ENCODE measurements at regions of chr12 and their contacts with region 1.

Region 1: GRCh38 chr12:49866859-49867579 is 24.1 kb upstream of the BCDIN3D start:
- DNase-seq: no peak
- H3K4me3 ChIP-seq: no peak overlapping the region
- CTCF ChIP-seq: peak; percentile 96

Region 2: DNA sequence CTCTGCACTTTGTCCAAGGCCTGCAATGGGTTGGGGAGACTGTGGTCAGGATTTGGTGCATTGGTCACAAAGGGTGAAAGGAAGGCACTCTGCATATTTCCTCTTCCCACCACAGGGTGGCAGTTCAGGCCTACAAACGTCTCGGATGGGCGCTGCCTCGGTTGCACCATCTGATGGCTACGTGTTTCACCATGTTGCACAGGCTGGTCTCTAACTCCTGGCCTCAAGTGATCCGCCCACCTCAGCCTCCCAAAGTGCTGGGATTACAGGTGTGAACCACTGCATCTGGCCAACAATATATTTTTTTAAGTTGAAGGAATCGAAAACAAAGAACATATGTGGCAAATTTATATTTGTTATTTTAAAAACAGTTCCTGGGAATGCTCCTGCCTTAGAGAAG is 90.6 kb before region 1 on chr12:
- CTCF ChIA-PET with region 1: interaction called, 26 read pairs
- POLR2A ChIA-PET with region 1: no interaction called
- DNase-seq: no peak
- H3K4me3 ChIP-seq: no peak overlapping the region
- CTCF ChIP-seq: peak; percentile 83

Region 3: DNA sequence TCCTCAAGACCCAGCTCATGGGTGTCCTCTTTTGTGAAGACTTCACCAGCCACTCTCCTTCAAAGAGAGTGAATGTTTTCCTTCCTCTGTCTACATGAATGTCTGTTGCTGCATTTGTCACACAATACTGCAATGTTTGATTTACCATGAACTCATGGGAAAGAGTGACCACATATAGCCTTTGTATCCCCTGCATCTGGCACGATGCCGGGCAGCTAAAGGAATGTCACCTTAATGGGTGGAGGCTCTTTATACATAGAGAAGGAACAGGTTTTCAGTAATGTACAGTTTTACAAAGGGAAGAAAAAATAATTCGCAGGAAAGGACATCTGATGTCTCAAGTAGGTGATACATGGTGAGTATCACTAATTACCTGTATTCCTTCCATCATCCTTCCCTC is 12.0 kb before region 1 on chr12:
- CTCF ChIA-PET with region 1: interaction called, 47 read pairs
- POLR2A ChIA-PET with region 1: no interaction called
- DNase-seq: no peak
- H3K4me3 ChIP-seq: no peak overlapping the region
- CTCF ChIP-seq: no peak

Region 4: GRCh38 chr12:49892084-49892731 is 25.2 kb after region 1 on chr12:
- CTCF ChIA-PET with region 1: interaction called, 14 read pairs
- POLR2A ChIA-PET with region 1: interaction called, 3 read pairs
- DNase-seq: no peak
- H3K4me3 ChIP-seq: no peak overlapping the region
- CTCF ChIP-seq: no peak

Region 5: DNA sequence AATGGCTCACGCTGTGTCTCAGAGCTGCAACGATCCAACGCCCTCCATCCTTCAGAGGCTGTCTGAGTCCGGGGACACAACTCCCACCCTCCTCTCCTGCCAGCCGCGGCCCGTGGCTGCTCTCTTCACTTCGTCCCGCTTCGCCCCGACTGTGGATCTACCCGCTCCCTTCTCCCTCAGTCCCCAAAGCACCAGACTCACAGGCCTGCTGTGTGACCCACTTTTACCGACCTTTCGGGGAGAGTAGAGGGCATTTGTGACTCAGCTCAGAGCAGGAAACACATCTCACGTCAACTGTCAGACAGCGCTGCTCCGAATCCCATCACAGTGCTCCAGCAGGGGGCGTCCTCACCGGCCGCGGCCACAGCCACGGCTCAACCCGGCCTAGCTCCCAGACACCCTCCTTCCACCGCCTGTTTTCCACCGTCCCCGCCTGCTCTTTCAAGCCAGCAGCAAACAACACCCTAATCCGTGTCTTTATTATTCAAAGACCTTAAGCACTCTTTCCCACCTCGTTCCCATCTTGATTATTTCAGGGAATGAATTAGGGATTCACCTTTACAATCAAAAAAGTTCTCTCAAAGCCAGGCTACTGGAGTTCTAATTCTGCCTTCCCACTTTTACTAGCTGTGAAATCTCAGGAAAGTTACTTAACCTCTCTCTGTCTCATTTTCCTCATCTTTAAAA is 78.5 kb after region 1 on chr12:
- CTCF ChIA-PET with region 1: interaction called, 41 read pairs
- POLR2A ChIA-PET with region 1: no interaction called
- DNase-seq: peak; percentile 12
- H3K4me3 ChIP-seq: peak overlapping the region; percentile 28
- CTCF ChIP-seq: peak; percentile 96

Region 6: DNA sequence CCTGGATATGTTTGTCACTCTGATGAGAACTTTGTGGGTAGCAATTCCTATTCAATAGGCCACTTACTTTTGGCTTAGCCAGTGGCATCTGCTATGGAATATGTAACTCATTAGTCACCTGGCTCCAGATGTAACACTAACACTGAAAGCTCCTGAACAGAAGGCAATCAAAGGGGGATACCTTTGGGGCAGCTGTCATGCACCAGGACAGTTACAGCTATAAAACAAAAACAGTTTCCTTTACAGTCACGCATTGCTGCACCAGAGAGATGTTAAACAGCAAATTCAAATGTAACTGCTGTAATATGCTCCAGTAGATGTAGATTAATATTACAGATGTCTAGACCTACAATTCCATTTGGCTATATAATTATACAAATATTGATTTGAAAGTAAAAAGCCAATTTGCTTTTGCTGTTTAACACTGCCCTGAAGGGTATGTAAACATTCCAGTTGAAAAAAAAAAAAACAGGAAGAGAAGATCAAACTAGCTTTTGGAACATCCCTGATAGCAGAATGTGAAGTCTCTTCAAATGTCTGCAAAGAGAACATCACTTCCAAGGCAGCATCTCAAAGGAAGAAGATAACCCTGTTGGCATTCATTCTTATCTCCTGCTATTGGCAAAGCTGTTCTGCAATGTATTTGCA is 139.9 kb after region 1 on chr12:
- CTCF ChIA-PET with region 1: no interaction called
- POLR2A ChIA-PET with region 1: no interaction called
- DNase-seq: no peak
- H3K4me3 ChIP-seq: no peak overlapping the region
- CTCF ChIP-seq: no peak

Region 7: GRCh38 chr12:50050410-50051098 is 183.5 kb after region 1 on chr12:
- CTCF ChIA-PET with region 1: interaction called, 22 read pairs
- POLR2A ChIA-PET with region 1: no interaction called
- DNase-seq: no peak
- H3K4me3 ChIP-seq: peak overlapping the region; percentile 16; the same call in 1 of the 2 replicates
- CTCF ChIP-seq: no peak

Region 8: DNA sequence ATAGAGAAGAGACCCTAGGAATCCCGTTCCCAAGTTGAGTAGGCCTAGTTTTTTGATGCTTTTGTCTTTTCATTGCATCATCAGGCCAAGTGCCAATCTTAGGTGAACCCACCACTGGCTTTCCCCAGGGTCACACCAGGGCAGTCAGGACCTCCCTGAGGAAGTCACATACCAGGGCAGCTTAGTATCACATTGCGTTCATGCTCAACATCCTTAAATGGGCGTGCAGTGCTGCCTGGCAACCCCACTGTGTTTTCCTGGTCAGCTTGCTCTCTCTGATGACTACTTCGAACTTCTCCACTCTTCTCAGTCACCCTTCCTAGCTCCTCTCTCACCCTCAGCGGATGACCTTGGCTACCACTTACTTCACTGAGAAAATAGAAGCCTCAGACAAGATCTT is 199.4 kb after region 1 on chr12:
- CTCF ChIA-PET with region 1: interaction called, 59 read pairs
- POLR2A ChIA-PET with region 1: no interaction called
- DNase-seq: peak; percentile 84
- H3K4me3 ChIP-seq: no peak overlapping the region
- CTCF ChIP-seq: no peak

Region 9: DNA sequence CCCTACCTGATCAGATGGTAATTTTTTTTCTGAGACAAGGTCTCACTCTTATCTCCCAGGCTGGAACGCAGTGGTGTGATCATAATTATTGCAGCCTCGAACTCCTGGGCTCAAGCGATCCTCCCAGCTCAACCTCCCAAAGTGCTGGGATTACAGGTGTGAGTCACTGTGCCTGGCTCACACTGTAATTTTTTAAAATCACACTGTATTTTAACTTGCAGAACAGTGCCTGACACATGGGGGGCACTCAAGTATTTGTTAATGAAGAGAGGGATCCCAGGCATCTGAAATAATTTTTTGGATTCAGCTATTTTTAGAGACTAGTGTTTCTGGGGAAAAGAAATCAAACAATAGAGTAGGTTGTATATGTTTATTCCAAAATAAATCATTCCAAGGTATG is 394.6 kb after region 1 on chr12:
- CTCF ChIA-PET with region 1: no interaction called
- POLR2A ChIA-PET with region 1: no interaction called
- DNase-seq: no peak
- H3K4me3 ChIP-seq: no peak overlapping the region
- CTCF ChIP-seq: no peak

Region 10: DNA sequence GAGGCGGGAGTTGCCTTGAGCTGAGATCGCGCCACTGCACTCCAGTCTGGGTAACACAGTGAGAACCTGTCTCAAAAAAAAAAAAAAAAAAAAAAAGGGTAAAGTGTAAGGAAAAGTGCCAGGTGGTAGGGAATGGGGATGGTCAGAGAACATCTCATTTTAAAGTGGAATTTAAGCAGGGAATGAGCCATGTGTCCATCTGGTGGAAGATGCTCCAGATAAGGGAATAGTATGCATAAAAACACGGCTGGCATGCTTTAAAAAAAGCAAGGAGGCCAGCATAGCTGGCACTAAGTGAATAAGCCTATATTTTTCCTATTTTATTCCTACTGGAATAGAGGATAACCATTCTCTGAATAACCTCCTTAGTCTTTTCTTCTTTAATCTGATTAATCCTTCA is 495.7 kb after region 1 on chr12:
- CTCF ChIA-PET with region 1: no interaction called
- POLR2A ChIA-PET with region 1: no interaction called
- DNase-seq: no peak
- H3K4me3 ChIP-seq: no peak overlapping the region
- CTCF ChIP-seq: no peak

Measured in AG04449 (cell line).